ENCODE measurements at regions of chr12 and their contacts with region 1.

Region 1: GRCh38 chr12:59768031-59768430 is 172.2 kb downstream of the SLC16A7 start:
- DNase-seq: no peak
- H3K4me3 ChIP-seq: no peak overlapping the region
- H3K27ac ChIP-seq: no peak overlapping the region
- H3K4me1 ChIP-seq: no peaks in the 10 kb centered on the region
- H3K27me3 ChIP-seq: no peaks in the 10 kb centered on the region
- CTCF ChIP-seq: no peak
- EP300 ChIP-seq: no peak
- POLR2A ChIP-seq: no peak

Region 2: DNA sequence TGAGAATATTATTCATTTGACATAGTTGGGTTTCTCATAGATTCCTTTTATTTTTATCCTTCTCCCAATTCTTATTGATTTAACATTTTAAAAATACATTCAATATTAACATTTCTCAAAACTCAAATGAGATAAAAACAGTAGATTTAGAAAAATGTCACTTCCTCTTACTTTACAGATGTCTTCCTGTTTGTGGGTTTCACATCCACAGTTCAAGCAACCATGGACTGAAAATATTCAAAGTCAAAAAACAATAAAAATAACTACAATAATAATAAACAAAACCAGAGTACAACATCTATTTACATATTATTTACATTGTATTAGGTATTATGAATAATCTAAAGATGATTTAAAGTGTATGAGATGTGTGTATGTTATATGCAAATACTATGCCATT is 283.5 kb before region 1 on chr12:
- intact Hi-C with region 1: loop called (anchors 5 kb)
- DNase-seq: no peak
- H3K4me3 ChIP-seq: no peak overlapping the region
- H3K27ac ChIP-seq: no peak overlapping the region
- H3K4me1 ChIP-seq: no peaks in the 10 kb centered on the region
- H3K27me3 ChIP-seq: no peaks in the 10 kb centered on the region
- CTCF ChIP-seq: no peak
- EP300 ChIP-seq: no peak
- POLR2A ChIP-seq: no peak

Region 3: DNA sequence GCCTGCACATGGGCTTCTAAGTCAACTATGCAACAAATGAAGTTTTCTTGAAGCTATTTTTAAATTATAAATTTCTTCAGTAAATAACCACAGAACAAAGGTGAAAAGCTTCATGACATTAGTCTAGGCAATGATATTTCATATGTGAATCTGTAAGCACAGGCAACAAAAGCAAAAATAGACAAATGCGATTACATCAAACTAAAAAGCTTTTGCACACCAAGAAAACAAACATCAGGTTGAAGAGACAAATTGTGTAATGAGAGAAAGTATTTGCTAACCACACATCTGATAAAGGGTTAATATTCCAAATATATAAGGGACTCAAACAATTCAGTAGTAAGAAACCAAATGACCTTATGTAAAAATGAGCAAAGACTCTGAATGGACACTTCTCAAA is 187.9 kb after region 1 on chr12:
- intact Hi-C with region 1: no loop called
- DNase-seq: no peak
- H3K4me3 ChIP-seq: no peak overlapping the region
- H3K27ac ChIP-seq: no peak overlapping the region
- H3K4me1 ChIP-seq: no peaks in the 10 kb centered on the region
- H3K27me3 ChIP-seq: no peaks in the 10 kb centered on the region
- CTCF ChIP-seq: no peak
- EP300 ChIP-seq: no peak
- POLR2A ChIP-seq: no peak